ENCODE measurements at regions of chr5 and their contacts with region 1.

Region 1: GRCh38 chr5:32297181-32298058 is 15.3 kb downstream of the MTMR12 start:
- DNase-seq: no peak
- H3K4me3 Mint-ChIP-seq: no peak overlapping the region
- H3K27ac Mint-ChIP-seq: peak overlapping the region; percentile 20
- H3K4me1 Mint-ChIP-seq: peaks cover 19% of the 10 kb centered on the region
- H3K27me3 Mint-ChIP-seq: no peaks in the 10 kb centered on the region

Region 2: DNA sequence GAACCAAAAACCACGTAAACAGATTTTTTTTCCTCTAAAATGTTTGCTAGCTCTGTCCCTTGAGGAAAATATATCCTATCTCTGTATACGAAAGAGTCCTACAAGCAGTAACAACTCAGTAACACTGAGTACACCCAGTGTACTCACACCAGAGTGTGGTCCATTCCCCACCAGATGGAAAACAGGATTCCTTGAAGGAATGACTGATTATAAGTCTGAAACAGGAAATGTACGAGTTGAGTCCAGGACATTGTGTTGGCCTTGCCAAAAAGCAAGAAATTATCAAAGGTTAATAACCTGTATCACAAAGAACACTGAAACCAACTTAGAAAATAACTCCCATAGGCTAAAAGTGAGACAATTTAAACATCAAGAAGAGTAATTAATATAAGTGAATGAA is 143.7 kb before region 1 on chr5:
- intact Hi-C with region 1: no loop called
- DNase-seq: no peak
- H3K4me3 Mint-ChIP-seq: no peak overlapping the region
- H3K27ac Mint-ChIP-seq: no peak overlapping the region
- H3K4me1 Mint-ChIP-seq: peaks cover 29% of the 10 kb centered on the region
- H3K27me3 Mint-ChIP-seq: no peaks in the 10 kb centered on the region

Region 3: GRCh38 chr5:32280656-32281081 is 16.8 kb before region 1 on chr5:
- intact Hi-C with region 1: loop called (anchors 2 kb)
- DNase-seq: no peak
- H3K4me3 Mint-ChIP-seq: peak overlapping the region; percentile 7
- H3K27ac Mint-ChIP-seq: peak overlapping the region; percentile 93
- H3K4me1 Mint-ChIP-seq: peaks cover 54% of the 10 kb centered on the region
- H3K27me3 Mint-ChIP-seq: no peaks in the 10 kb centered on the region

Measured in activated T-helper 2 cell treated with anti-CD3 and anti-CD28 coated beads, Interferon-gamma antibody, Interleukin-2, Interleukin-4, amounts not matched to agents 10 μg/mL and 5 μg/mL and 100 μg/mL, durations not matched to agents 14 hours and 24 hours and 36 hours (primary cell).